ENCODE measurements at regions of chr22 and their contacts with region 1.

Region 1: GRCh38 chr22:27405672-27406388 is 395.7 kb downstream of the MN1 start:
- DNase-seq: peak; percentile 16
- ATAC-seq: peak; percentile 94
- H3K4me3 ChIP-seq: no peak overlapping the region
- H3K27ac ChIP-seq: no peak overlapping the region
- H3K4me1 ChIP-seq: no peaks in the 10 kb centered on the region
- H3K27me3 ChIP-seq: peaks cover 0 to 5% of the 10 kb centered on the region in 2 experiments; a peak in 2 of 5 replicates
- CTCF ChIP-seq: peak; percentile 86
- EP300 ChIP-seq: no peak
- POLR2A ChIP-seq: no peak
- RAD21 ChIP-seq: peak; percentile 86

Region 2: DNA sequence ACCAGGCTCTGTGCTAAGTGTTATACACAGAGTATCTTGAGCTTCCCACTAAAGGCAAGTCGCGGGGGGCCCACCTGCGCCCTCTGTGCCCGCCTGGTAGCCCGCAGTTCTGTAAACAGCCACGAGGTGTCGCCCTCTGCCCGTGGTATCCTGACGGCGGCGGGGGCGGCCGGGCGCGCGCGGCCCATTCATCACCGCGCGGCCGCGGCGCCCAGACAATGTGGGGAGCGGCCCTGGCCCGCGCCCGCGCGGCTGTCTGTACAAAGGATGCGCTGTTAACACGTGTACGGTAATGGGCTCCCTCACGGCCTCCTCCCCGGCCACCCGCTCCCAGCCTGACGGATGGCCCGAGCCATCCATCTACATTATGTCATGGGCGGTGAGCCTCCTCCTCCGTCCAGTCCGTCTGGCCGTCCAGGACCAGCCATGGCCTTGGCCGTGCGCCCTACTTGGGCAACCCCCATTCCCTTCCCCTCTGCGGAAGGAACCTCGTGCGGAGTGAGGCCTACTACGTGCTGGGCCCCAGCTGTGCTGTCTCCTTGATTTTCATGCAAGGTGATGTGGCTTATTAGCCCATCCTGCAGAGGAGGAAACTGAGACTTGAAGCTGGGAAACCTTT is 649.0 kb before region 1 on chr22:
- CTCF ChIA-PET with region 1: no interaction called
- POLR2A ChIA-PET with region 1: no interaction called
- in situ Hi-C with region 1: no loop called
- intact Hi-C with region 1: loop called (anchors 5 kb)
- DNase-seq: no peak
- ATAC-seq: peak; percentile 81
- H3K4me3 ChIP-seq: no peak overlapping the region; a peak in 1 of 6 replicates
- H3K27ac ChIP-seq: no peak overlapping the region
- H3K4me1 ChIP-seq: no peaks in the 10 kb centered on the region
- H3K27me3 ChIP-seq: no peaks in the 10 kb centered on the region
- CTCF ChIP-seq: peak; percentile 80
- EP300 ChIP-seq: no peak
- POLR2A ChIP-seq: no peak
- RAD21 ChIP-seq: peak; percentile 90

Region 3: DNA sequence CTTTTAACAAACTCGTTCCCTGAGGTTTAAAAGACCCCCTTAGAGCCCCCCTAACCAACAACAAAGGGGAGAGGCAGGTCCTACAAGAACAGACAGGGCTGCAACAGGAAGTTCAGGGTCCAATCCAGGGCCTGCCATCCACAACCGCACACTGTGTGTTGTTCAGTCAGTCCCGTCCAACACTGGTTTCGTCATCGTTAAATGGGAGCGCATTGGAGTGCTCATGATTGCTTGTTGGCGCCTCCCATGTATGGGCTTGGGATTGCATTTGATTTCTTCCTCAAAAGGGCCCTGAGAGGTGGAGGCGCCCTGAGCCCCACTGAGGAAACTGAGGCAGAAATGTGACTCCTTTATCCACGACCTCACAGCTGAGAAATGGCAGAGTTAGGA is 221.6 kb after region 1 on chr22:
- CTCF ChIA-PET with region 1: no interaction called
- POLR2A ChIA-PET with region 1: no interaction called
- in situ Hi-C with region 1: no loop called
- intact Hi-C with region 1: loop called (anchors 5 kb)
- DNase-seq: peak; percentile 87
- ATAC-seq: peak; percentile 97
- H3K4me3 ChIP-seq: peak overlapping the region in 2 of 3 experiments; percentile 28 to 58; a peak in 3 of 6 replicates
- H3K27ac ChIP-seq: peak overlapping the region; percentile 41
- H3K4me1 ChIP-seq: peaks cover 38% of the 10 kb centered on the region
- H3K27me3 ChIP-seq: no peaks in the 10 kb centered on the region; a peak in 1 of 5 replicates
- CTCF ChIP-seq: peak; percentile 66
- EP300 ChIP-seq: no peak
- POLR2A ChIP-seq: no peak
- RAD21 ChIP-seq: 0 out of 2 replicates have a peak, but pooled peaks have one; percentile 28

Region 4: DNA sequence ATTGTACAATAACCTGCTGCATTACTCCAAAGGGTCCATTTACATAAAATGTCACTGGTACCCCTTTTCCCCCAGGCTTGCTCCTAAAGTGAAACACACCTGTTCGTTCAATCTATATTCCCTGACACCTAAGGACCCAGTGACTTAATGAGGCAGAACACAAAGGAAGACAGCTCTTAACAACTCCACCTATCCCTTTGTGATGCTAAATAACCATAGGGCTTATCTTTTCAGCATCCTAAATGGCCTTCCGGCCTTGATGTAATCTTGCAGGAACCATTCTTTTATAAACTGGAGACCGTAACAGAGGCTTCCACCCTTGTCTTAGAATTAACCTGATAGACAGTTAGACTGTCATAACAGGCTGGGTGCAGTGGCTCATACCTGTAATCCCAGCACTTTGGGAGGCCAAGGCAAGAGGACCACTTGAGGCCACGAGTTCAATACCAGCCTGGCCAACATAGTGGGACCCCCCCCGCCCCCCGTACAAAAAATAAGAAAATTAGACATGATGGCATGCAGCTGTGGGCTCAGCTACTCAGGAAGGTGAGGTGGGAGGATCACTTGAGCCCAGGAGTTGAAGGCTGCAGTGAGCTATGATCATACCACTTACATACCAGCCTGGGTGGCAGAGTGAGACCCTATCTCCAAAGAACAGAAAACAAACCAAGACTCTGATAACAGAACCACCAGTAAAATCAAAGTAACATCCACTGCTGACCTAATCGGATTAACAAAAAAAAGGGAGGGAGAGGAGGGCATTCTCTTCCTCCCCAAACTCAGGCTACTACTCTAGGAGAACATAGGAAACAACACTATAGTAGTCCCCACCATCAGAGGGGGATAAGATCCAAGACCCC is 1330.7 kb after region 1 on chr22:
- CTCF ChIA-PET with region 1: no interaction called
- POLR2A ChIA-PET with region 1: no interaction called
- in situ Hi-C with region 1: no loop called
- intact Hi-C with region 1: no loop called
- DNase-seq: no peak
- ATAC-seq: no peak
- H3K4me3 ChIP-seq: no peak overlapping the region
- H3K27ac ChIP-seq: no peak overlapping the region
- H3K4me1 ChIP-seq: peaks cover 34% of the 10 kb centered on the region
- H3K27me3 ChIP-seq: no peaks in the 10 kb centered on the region
- CTCF ChIP-seq: no peak
- EP300 ChIP-seq: no peak
- POLR2A ChIP-seq: no peak
- RAD21 ChIP-seq: no peak